PC-3 (cell line): ENCODE measurements at regions of chr15 and their contacts with region 1.

Region 1: GRCh38 chr15:91522663-91523332 is 330.7 kb upstream of the SLCO3A1 start:
- DNase-seq: peak; percentile 44
- ATAC-seq: no peak
- H3K4me3 ChIP-seq: no peak overlapping the region
- H3K27ac ChIP-seq: peak overlapping the region; percentile 37
- H3K4me1 ChIP-seq: peaks cover 5% of the 10 kb centered on the region; the same call in 1 of the 2 replicates
- H3K27me3 ChIP-seq: no peaks in the 10 kb centered on the region
- CTCF ChIP-seq: peak; percentile 49

Region 2: DNA sequence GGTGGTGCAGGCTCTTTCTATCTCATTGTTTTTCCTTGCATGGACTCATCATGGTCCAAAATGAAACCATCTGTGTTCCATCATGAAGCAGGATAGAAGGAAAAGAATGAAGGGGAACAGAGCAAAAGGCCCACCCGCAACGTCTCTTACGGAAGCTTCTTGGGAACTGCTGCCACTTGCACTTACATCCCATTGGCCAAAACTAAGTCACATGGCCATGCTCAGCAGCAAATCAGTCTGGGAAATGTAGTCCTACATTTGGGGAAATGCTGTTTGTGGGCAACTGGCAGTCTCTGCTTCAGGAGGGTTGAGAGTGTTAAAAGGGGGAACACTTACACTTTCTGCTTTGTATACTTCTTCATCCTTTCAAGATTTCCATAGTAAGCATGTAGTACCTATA is 231.1 kb before region 1 on chr15:
- CTCF ChIA-PET with region 1: no interaction called
- POLR2A ChIA-PET with region 1: no interaction called
- intact Hi-C with region 1: no loop called
- DNase-seq: no peak
- ATAC-seq: no peak
- H3K4me3 ChIP-seq: no peak overlapping the region
- H3K27ac ChIP-seq: no peak overlapping the region
- H3K4me1 ChIP-seq: no peaks in the 10 kb centered on the region
- H3K27me3 ChIP-seq: peaks cover 66% of the 10 kb centered on the region
- CTCF ChIP-seq: no peak

Region 3: GRCh38 chr15:91302588-91303439 is 220.0 kb before region 1 on chr15:
- CTCF ChIA-PET with region 1: no interaction called
- POLR2A ChIA-PET with region 1: no interaction called
- intact Hi-C with region 1: loop called (anchors 5 kb)
- DNase-seq: peak; percentile 78
- ATAC-seq: no peak
- H3K4me3 ChIP-seq: no peak overlapping the region
- H3K27ac ChIP-seq: no peak overlapping the region
- H3K4me1 ChIP-seq: no peaks in the 10 kb centered on the region
- H3K27me3 ChIP-seq: peaks cover 81% of the 10 kb centered on the region
- CTCF ChIP-seq: peak; percentile 79